GM12878 (cell line): ENCODE measurements at regions of chr9 and their contacts with region 1.

Region 1: GRCh38 chr9:26129217-26129616 is 451.0 kb upstream of the TUSC1 start:
- DNase-seq: no peak
- ATAC-seq: no peak
- H3K4me3 ChIP-seq: no peak overlapping the region
- H3K27ac ChIP-seq: no peak overlapping the region
- H3K4me1 ChIP-seq: no peaks in the 10 kb centered on the region
- H3K27me3 ChIP-seq: no peaks in the 10 kb centered on the region
- CTCF ChIP-seq: no peak
- EP300 ChIP-seq: no peak
- POLR2A ChIP-seq: no peak
- RAD21 ChIP-seq: no peak

Region 2: DNA sequence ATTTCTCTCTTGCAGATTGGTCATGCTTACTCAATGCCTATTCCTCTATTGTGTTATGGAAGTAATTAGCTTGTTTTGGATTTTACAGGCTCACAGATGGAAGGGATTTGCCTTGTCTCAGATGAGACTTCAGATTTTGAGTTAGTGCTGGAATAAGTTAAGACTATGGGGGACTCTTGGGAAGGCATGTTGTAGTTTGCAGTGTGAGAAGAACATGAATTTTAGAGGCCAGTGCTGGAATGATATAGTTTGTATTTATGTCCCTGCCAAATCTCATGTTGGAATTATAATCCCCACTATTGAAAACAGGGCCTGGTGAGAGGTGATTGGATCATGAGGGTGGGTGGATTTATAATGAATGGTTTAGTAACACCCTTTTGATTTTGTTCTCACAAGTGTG is 444.9 kb before region 1 on chr9:
- CTCF ChIA-PET with region 1: no interaction called
- POLR2A ChIA-PET with region 1: no interaction called
- RAD21 ChIA-PET with region 1: no interaction called
- SMC1A ChIA-PET with region 1: no interaction called
- in situ Hi-C with region 1: no loop called
- intact Hi-C with region 1: no loop called
- DNase-seq: no peak
- ATAC-seq: no peak
- H3K4me3 ChIP-seq: no peak overlapping the region
- H3K27ac ChIP-seq: no peak overlapping the region
- H3K4me1 ChIP-seq: no peaks in the 10 kb centered on the region
- H3K27me3 ChIP-seq: no peaks in the 10 kb centered on the region
- CTCF ChIP-seq: no peak
- EP300 ChIP-seq: no peak
- POLR2A ChIP-seq: no peak
- RAD21 ChIP-seq: no peak

Region 3: GRCh38 chr9:26175264-26175663 is 46.0 kb after region 1 on chr9:
- CTCF ChIA-PET with region 1: no interaction called
- POLR2A ChIA-PET with region 1: no interaction called
- RAD21 ChIA-PET with region 1: no interaction called
- SMC1A ChIA-PET with region 1: no interaction called
- in situ Hi-C with region 1: no loop called
- intact Hi-C with region 1: loop called (anchors 5 kb)
- DNase-seq: no peak
- ATAC-seq: no peak
- H3K4me3 ChIP-seq: no peak overlapping the region
- H3K27ac ChIP-seq: no peak overlapping the region
- H3K4me1 ChIP-seq: no peaks in the 10 kb centered on the region
- H3K27me3 ChIP-seq: no peaks in the 10 kb centered on the region
- CTCF ChIP-seq: no peak
- EP300 ChIP-seq: no peak
- POLR2A ChIP-seq: no peak
- RAD21 ChIP-seq: no peak